IMR-90 (cell line): ENCODE measurements at regions of chrX and their contacts with region 1.

Region 1: GRCh38 chrX:135194684-135195083 is 23.5 kb upstream of the CT55 start:
- DNase-seq: no peak
- ATAC-seq: no peak
- H3K4me3 ChIP-seq: no peak overlapping the region
- H3K27ac ChIP-seq: no peak overlapping the region
- H3K4me1 ChIP-seq: no peaks in the 10 kb centered on the region
- H3K27me3 ChIP-seq: peaks cover 1% of the 10 kb centered on the region
- CTCF ChIP-seq: no peak
- POLR2A ChIP-seq: no peak
- RAD21 ChIP-seq: no peak

Region 2: DNA sequence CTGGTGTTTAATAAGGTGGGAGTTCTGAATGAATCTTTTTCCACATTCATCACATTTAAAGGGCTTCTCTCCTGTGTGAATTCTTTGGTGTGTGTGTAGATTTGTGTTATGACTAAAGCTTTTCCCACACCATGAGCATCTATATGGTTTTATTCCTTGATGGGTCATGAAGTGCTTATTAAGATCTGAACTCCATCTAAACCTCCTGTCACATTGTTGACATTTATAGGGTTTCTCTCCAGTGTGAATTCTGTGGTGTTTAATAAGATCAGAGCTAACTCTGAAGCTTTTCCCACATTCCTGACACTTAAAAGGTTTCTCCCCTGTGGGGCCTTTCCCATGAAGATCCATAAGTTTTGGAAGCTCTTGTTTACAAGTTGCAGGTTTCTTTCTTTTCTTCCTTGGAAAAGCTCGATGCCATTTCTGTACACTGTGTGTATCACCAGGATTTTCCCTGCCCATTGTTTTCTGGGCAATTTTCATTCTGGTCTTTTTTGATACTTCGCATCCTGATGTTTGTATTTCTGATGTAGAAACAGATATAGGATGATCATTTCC is 92.7 kb after region 1 on chrX:
- CTCF ChIA-PET with region 1: no interaction called
- POLR2A ChIA-PET with region 1: no interaction called
- dilution Hi-C with region 1: no loop called
- in situ Hi-C with region 1: loop called (anchors 10 kb)
- intact Hi-C with region 1: no loop called
- DNase-seq: no peak
- ATAC-seq: no peak
- H3K4me3 ChIP-seq: no peak overlapping the region
- H3K27ac ChIP-seq: no peak overlapping the region
- H3K4me1 ChIP-seq: no peaks in the 10 kb centered on the region
- H3K27me3 ChIP-seq: no peaks in the 10 kb centered on the region
- CTCF ChIP-seq: no peak
- POLR2A ChIP-seq: no peak
- RAD21 ChIP-seq: no peak